ENCODE measurements at regions of chrX and their contacts with region 1.

Region 1: GRCh38 chrX:71532753-71533425 is at the start of gene OGT:
- DNase-seq: peak; percentile 96
- ATAC-seq: peak; percentile 81
- H3K4me3 Mint-ChIP-seq: peak within 1 kb of the TSS; percentile 95
- H3K27ac Mint-ChIP-seq: peak within 1 kb of the TSS; percentile 98
- H3K4me1 Mint-ChIP-seq: peaks cover 27% of the 10 kb centered on the region
- H3K27me3 Mint-ChIP-seq: no peaks in the 10 kb centered on the region
- total RNA-seq, gene OGT: 252 to 264 TPM

Region 2: GRCh38 chrX:71283403-71284143 is 249.3 kb before region 1 on chrX and contains the start of gene NONO:
- CTCF ChIA-PET with region 1: interaction called, 4 read pairs
- POLR2A ChIA-PET with region 1: interaction called, 23 read pairs
- DNase-seq: peak; percentile 94
- ATAC-seq: peak; percentile 85
- H3K4me3 Mint-ChIP-seq: peak within 1 kb of the TSS; percentile 97
- H3K27ac Mint-ChIP-seq: peak within 1 kb of the TSS; percentile 100
- H3K4me1 Mint-ChIP-seq: peaks cover 17% of the 10 kb centered on the region
- H3K27me3 Mint-ChIP-seq: no peaks in the 10 kb centered on the region
- total RNA-seq, gene NONO: 446 to 478 TPM

Region 3: GRCh38 chrX:71365876-71366673 is 166.8 kb before region 1 on chrX and contains the start of gene TAF1:
- CTCF ChIA-PET with region 1: no interaction called
- POLR2A ChIA-PET with region 1: interaction called, 37 read pairs
- DNase-seq: peak; percentile 95
- ATAC-seq: peak; percentile 93
- H3K4me3 Mint-ChIP-seq: peak within 1 kb of the TSS; percentile 97
- H3K27ac Mint-ChIP-seq: peak within 1 kb of the TSS; percentile 99
- H3K4me1 Mint-ChIP-seq: peaks cover 20% of the 10 kb centered on the region
- H3K27me3 Mint-ChIP-seq: no peaks in the 10 kb centered on the region
- total RNA-seq, gene TAF1: 35.0 to 43.6 TPM

Region 4: GRCh38 chrX:71466979-71467523 is 65.8 kb before region 1 on chrX:
- CTCF ChIA-PET with region 1: no interaction called
- POLR2A ChIA-PET with region 1: no interaction called
- DNase-seq: no peak
- ATAC-seq: no peak
- H3K4me3 Mint-ChIP-seq: no peak overlapping the region
- H3K27ac Mint-ChIP-seq: no peak overlapping the region
- H3K4me1 Mint-ChIP-seq: no peaks in the 10 kb centered on the region
- H3K27me3 Mint-ChIP-seq: no peaks in the 10 kb centered on the region

Region 5: DNA sequence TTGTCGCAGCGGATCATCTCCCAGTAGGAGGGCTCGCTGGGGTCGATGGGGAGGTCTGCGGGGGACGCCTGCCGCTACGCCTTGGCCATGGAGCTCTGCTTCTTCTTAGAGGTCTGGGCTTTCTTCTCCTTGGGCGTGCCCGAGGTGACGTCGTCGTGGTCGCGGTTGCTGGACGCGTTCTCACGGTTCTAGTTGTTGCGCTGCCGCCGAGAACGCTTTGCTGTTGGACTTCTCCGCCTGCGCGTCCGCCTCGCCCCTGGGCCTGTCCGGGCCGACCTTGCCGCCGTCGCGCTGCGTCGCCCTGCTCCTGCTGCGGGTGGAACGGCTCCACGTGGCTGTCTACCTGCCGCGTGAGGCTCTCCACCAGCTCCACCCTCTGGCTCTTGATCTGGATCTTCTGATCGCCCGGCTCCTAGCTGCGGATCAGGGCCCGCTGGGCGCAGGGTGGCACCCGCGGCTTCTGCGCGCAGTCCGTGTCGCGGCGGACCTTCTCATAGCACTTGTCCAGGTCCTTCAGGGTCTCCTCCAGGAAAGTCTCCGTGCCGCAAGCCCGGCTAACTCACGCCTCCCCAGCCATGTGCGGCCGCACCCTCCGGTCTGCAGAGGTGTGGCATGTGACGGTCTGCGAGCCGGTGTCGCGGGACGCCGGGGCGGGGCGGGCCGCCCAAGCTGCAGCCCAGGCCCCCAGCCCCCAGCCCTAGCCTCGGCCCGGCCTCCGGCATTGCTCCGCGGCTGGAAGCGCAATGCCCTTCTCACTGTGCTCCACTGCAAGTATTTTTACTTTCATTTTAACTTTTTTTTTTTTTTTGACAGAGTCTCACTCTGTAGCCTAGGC is 40.4 kb before region 1 on chrX:
- CTCF ChIA-PET with region 1: interaction called, 4 read pairs
- POLR2A ChIA-PET with region 1: interaction called, 23 read pairs
- DNase-seq: peak; percentile 61
- ATAC-seq: peak; percentile 89
- H3K4me3 Mint-ChIP-seq: peak overlapping the region; percentile 80
- H3K27ac Mint-ChIP-seq: peak overlapping the region; percentile 86
- H3K4me1 Mint-ChIP-seq: peaks cover 17% of the 10 kb centered on the region
- H3K27me3 Mint-ChIP-seq: no peaks in the 10 kb centered on the region

Region 6: DNA sequence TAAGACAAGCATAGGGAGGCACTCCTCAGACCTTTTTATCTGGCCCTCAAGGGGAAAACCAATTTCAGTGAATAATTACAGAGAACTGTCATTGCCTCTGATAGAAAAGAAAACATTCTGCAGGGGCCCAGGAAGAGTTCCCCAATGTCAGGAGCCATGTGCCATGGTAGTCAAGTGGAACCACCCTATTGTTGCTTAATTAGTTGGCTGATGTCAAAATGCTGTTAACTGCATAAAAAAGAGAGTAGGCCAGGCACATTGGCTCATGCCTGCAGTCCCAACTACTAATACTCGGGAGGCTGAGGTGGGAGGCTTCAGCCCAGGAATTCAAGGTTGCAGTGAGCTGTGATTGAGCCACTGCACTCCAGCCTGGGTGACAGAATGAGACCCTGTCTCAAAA is 28.5 kb before region 1 on chrX:
- CTCF ChIA-PET with region 1: no interaction called
- POLR2A ChIA-PET with region 1: no interaction called
- DNase-seq: no peak
- ATAC-seq: no peak
- H3K4me3 Mint-ChIP-seq: no peak overlapping the region
- H3K27ac Mint-ChIP-seq: no peak overlapping the region
- H3K4me1 Mint-ChIP-seq: no peaks in the 10 kb centered on the region
- H3K27me3 Mint-ChIP-seq: peaks cover 3% of the 10 kb centered on the region

Region 7: GRCh38 chrX:71514367-71515038 is 18.4 kb before region 1 on chrX:
- CTCF ChIA-PET with region 1: interaction called, 9 read pairs
- POLR2A ChIA-PET with region 1: interaction called, 33 read pairs
- DNase-seq: peak; percentile 68
- ATAC-seq: peak; percentile 92
- H3K4me3 Mint-ChIP-seq: no peak overlapping the region
- H3K27ac Mint-ChIP-seq: peak overlapping the region; percentile 65
- H3K4me1 Mint-ChIP-seq: peaks cover 24% of the 10 kb centered on the region
- H3K27me3 Mint-ChIP-seq: no peaks in the 10 kb centered on the region

Region 8: DNA sequence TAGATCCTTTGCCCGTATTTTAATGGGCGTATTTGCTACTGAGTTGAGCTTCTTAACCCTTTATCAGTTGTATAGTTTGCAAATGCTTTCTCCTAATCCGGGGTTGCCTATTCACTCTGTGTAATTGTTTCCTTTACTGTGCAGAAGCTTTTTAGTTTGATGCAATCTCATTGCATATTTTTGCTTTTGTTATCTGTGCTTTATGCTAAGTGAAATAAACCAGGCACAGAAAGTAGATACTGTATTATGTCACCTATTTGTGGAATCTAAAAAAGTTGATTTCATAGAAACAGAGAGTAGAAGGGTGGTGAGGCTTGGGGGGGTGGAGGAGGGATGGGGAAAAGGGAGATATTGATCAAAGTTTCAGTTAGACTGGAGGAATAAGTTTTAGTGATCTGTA is 17.7 kb after region 1 on chrX:
- CTCF ChIA-PET with region 1: interaction called, 3 read pairs
- POLR2A ChIA-PET with region 1: interaction called, 86 read pairs
- DNase-seq: no peak
- ATAC-seq: no peak
- H3K4me3 Mint-ChIP-seq: no peak overlapping the region
- H3K27ac Mint-ChIP-seq: peak overlapping the region; percentile 49
- H3K4me1 Mint-ChIP-seq: peaks cover 22% of the 10 kb centered on the region
- H3K27me3 Mint-ChIP-seq: no peaks in the 10 kb centered on the region

Region 9: GRCh38 chrX:71622576-71623450 is 89.9 kb after region 1 on chrX:
- CTCF ChIA-PET with region 1: interaction called, 12 read pairs
- POLR2A ChIA-PET with region 1: interaction called, 32 read pairs
- DNase-seq: peak; percentile 82
- ATAC-seq: peak; percentile 68
- H3K4me3 Mint-ChIP-seq: peak overlapping the region; percentile 70
- H3K27ac Mint-ChIP-seq: peak overlapping the region; percentile 91
- H3K4me1 Mint-ChIP-seq: peaks cover 70% of the 10 kb centered on the region
- H3K27me3 Mint-ChIP-seq: no peaks in the 10 kb centered on the region

Region 10: GRCh38 chrX:71679575-71680207 is 146.8 kb after region 1 on chrX:
- CTCF ChIA-PET with region 1: no interaction called
- POLR2A ChIA-PET with region 1: no interaction called
- DNase-seq: no peak
- ATAC-seq: no peak
- H3K4me3 Mint-ChIP-seq: no peak overlapping the region
- H3K27ac Mint-ChIP-seq: no peak overlapping the region
- H3K4me1 Mint-ChIP-seq: no peaks in the 10 kb centered on the region
- H3K27me3 Mint-ChIP-seq: peaks cover 5% of the 10 kb centered on the region